ENCODE measurements at regions of chr6 and their contacts with region 1.

Region 1: GRCh38 chr6:117449549-117450439 is 24.1 kb upstream of the ROS1 start:
- DNase-seq: peak; percentile 88
- H3K4me3 Mint-ChIP-seq: no peak overlapping the region
- H3K27ac Mint-ChIP-seq: no peak overlapping the region
- H3K4me1 Mint-ChIP-seq: no peaks in the 10 kb centered on the region
- H3K27me3 Mint-ChIP-seq: peaks cover 47% of the 10 kb centered on the region

Region 2: GRCh38 chr6:117346142-117346930 is 103.5 kb before region 1 on chr6:
- intact Hi-C with region 1: loop called (anchors 10 kb)
- DNase-seq: no peak
- H3K4me3 Mint-ChIP-seq: no peak overlapping the region
- H3K27ac Mint-ChIP-seq: no peak overlapping the region
- H3K4me1 Mint-ChIP-seq: no peaks in the 10 kb centered on the region
- H3K27me3 Mint-ChIP-seq: peaks cover 7% of the 10 kb centered on the region